Activated B cell treated with CpG ODN at 0.5 μM for 24 hours (primary cell): ENCODE measurements at regions of chr17 and their contacts with region 1.

Region 1: GRCh38 chr17:76585818-76586593 is at the start of gene ST6GALNAC2:
- DNase-seq: peak; percentile 52
- ATAC-seq: peak; percentile 75
- H3K4me3 Mint-ChIP-seq: peak within 1 kb of the TSS; percentile 75
- H3K27ac Mint-ChIP-seq: no peak within 1 kb of the TSS
- H3K4me1 Mint-ChIP-seq: peaks cover 18% of the 10 kb centered on the region
- H3K27me3 Mint-ChIP-seq: peaks cover 39% of the 10 kb centered on the region
- CTCF ChIP-seq: no peak
- total RNA-seq, gene ST6GALNAC2: not detected in 2 replicates

Region 2: DNA sequence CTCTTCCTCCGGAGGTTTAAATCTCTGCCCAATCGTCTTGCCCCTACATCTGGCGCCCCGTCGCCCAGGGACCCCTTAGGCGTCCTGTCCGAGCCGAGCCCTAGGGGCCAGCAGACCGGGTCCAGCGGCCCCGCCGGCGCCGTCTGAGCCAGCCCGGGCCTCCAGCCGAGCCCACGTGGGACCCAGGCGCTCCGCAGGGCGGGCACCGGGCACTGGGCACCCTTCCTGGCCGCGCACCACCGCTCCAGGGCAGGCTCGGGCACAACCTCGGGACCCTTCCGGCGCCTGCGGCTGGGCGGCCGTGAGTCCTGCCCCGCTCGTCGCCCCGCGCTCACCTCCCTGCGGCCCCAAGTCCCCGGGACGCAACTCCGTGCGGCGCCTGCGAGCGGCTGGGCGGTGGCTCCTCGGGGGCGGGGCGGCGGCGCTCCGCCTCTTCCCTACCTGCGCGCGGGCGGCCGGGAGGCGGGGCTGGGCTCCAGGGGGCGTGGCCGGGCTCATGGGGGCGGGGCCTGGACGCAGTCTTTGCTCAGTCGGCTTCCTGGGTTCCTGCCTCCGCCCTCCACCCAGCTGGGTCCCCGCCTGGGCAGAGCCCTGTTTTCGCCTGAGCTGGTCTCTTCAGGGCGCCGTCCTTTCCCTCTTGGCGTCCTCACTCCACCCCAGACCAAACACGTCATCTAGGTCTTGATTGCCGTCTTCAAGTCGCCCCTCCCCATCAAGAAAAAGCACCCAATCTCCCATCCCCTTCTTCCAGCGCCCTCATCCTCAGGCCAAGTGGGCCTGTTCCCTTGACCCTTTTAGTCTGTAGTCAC is 84.8 kb before region 1 on chr17 and contains the start of gene RHBDF2:
- CTCF ChIA-PET with region 1: no interaction called
- POLR2A ChIA-PET with region 1: no interaction called
- intact Hi-C with region 1: no loop called
- DNase-seq: peak; percentile 100
- ATAC-seq: peak; percentile 87
- H3K4me3 Mint-ChIP-seq: peak within 1 kb of the TSS; percentile 99
- H3K27ac Mint-ChIP-seq: peak within 1 kb of the TSS; percentile 95
- H3K4me1 Mint-ChIP-seq: peaks cover 64% of the 10 kb centered on the region
- H3K27me3 Mint-ChIP-seq: no peaks in the 10 kb centered on the region
- CTCF ChIP-seq: no peak
- total RNA-seq, gene RHBDF2: 150 and 189 TPM in 2 replicates

Region 3: GRCh38 chr17:76623271-76624146 is 37.5 kb after region 1 on chr17:
- CTCF ChIA-PET with region 1: interaction called, 4 read pairs
- POLR2A ChIA-PET with region 1: no interaction called
- intact Hi-C with region 1: loop called (anchors 5 kb)
- DNase-seq: peak; percentile 68
- ATAC-seq: peak; percentile 98
- H3K4me3 Mint-ChIP-seq: no peak overlapping the region
- H3K27ac Mint-ChIP-seq: no peak overlapping the region
- H3K4me1 Mint-ChIP-seq: no peaks in the 10 kb centered on the region
- H3K27me3 Mint-ChIP-seq: peaks cover 15% of the 10 kb centered on the region
- CTCF ChIP-seq: peak; percentile 78

Region 4: DNA sequence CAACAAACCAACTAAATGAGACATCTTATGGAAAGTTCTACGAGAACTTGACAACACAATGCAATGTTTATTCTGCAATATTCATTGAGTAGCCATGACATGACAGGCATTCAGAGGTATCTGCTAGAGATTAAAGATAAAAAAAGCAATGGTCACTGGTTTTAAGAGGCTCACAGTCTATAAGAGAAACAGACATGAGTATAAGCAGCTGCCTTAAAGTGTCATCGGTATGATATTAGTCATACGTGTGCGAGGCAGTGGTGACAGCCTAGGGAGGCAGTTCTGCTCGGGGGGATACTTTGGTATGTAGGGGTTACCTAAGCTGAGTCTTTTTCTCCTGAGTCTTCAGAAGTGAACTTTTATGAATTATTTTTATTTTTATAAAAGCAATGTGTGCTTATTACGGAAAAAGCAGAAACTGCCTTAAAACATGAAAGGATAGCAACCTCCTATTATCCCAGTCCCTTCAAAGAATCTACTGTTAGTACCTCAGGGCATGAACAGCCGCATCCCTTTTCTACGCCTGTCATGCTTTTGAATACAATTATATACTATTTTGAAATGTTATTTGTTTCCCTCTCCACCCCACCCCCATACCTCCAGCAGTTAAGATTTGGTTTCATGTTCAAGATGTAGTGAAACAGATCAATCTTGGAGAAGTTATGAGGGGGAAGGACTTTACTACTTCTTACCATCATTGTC is 49.8 kb after region 1 on chr17:
- CTCF ChIA-PET with region 1: no interaction called
- POLR2A ChIA-PET with region 1: no interaction called
- intact Hi-C with region 1: no loop called
- DNase-seq: no peak
- ATAC-seq: no peak
- H3K4me3 Mint-ChIP-seq: no peak overlapping the region
- H3K27ac Mint-ChIP-seq: no peak overlapping the region
- H3K4me1 Mint-ChIP-seq: no peaks in the 10 kb centered on the region
- H3K27me3 Mint-ChIP-seq: peaks cover 15% of the 10 kb centered on the region
- CTCF ChIP-seq: no peak

Region 5: DNA sequence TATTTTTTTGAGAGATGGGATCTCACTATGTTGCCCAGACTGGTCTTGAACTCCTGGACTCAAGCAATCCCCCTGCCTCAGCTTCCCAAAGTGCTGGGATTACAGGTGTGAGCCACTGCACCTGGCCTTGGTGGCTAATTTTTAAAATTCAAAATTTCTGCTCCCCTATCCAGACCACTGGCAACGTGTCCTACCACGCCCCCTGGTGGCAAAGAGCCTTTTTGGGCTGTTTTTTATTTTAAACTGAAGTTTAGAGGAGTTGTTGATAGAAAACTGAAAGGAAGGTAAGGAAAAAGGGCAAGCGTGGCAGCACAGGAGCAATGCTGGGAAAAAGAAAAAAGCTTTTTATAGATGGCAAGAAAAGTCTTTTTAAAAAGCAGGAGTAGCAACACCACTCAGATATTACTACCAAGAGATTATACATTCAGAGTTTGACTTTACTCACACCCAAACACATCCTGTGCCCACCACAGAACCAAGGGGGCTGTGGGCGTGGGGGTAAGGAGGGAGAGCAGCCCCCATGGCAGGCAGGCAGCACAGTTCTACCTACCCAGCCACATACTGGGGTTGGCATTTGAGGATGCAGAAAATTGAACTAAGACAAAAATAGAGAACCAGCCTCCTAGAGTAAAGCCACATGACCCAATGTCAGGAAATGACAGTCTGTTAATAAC is 129.0 kb after region 1 on chr17:
- CTCF ChIA-PET with region 1: no interaction called
- POLR2A ChIA-PET with region 1: interaction called, 10 read pairs
- intact Hi-C with region 1: no loop called
- DNase-seq: peak; percentile 56
- ATAC-seq: peak; percentile 29
- H3K4me3 Mint-ChIP-seq: peak overlapping the region; percentile 39
- H3K27ac Mint-ChIP-seq: peak overlapping the region; percentile 78
- H3K4me1 Mint-ChIP-seq: peaks cover 27% of the 10 kb centered on the region
- H3K27me3 Mint-ChIP-seq: no peaks in the 10 kb centered on the region
- CTCF ChIP-seq: peak; percentile 76